Aorta (tissue), 5 donors: ENCODE measurements at regions of chr11 and their contacts with region 1.

Region 1: DNA sequence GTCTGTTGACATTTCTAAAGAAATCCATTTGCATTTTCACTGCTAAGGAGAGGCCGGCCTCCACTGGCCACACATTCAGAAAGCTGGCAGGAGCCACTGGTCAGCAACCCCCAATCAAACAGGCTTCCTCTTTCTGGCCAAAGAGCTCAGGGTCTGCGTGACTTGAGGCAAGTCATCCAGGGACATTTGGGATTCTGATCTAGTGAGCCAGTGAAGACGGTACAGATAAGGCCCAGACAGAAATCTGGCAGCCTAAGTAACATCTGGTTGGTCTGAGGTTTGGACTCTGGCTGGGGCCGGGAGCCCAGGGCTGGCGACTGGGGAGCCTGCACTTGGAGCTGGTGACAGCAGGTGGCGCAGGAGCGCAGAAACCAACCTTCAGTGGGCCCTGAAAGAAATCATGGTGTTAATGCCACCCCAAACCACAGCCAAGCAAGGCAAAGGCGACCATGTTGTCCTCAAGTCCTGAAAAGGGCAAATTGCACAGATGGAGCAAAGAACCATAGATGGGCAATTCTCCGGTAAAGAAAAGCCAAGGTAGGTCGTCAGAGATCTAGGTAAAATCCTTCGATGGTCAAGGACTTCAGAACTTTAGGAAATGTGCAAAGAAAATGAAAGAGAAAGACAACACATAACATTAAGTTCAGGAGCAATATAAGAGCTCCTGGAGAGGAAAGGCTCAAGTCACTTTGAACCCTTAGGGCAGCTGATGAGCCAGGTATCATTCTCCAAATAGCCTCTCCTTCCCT is 99.4 kb upstream of the BLID start:
- DNase-seq: peak; percentile 89 to 92
- ATAC-seq: peak; percentile 90
- H3K4me3 ChIP-seq: no peak overlapping the region
- H3K27ac ChIP-seq: peak overlapping the region; percentile 72 to 83
- H3K4me1 ChIP-seq: peaks cover 6 to 10% of the 10 kb centered on the region in 2 donors
- H3K27me3 ChIP-seq: no peaks in the 10 kb centered on the region

Region 2: DNA sequence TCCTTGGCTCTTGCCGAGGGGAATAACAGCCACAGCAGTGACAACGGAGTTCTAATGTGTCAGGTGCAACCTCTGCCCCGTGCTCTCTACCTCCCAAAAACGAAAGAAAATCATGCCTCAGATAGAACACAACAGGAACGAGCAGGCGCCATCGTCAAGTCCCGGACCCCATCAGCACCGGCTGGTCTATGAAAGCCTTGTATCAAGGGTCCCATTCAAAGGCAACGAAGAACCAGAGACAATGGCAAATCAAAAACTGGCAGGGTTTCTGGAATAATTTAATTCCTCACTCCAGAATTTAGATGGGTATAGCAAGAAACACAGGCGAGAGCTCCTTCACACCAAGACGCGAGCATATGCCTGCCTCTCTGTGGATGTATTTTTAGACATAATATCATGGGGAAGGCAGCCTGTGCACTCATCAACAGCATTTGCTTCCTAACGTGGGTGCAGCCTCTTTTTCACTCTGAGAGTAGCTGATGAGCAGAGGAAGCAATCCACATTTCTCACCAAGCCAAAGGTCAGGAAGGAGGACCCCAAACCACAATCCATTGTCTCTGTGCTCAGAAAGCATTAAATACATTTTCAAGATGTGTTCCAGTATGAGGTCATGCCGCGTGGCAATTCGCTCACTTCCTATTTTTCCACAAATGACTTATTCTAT is 94.0 kb after region 1 on chr11:
- intact Hi-C with region 1: loop called in 1 of 2 experiments (anchors 5 kb)
- DNase-seq: peak in 1 of 2 donors; percentile 55
- ATAC-seq: no peak
- H3K4me3 ChIP-seq: peak overlapping the region; percentile 44 to 86
- H3K27ac ChIP-seq: peak overlapping the region; percentile 31 to 97
- H3K4me1 ChIP-seq: peaks cover 1 to 11% of the 10 kb centered on the region in 2 donors
- H3K27me3 ChIP-seq: no peaks in the 10 kb centered on the region

Region 3: DNA sequence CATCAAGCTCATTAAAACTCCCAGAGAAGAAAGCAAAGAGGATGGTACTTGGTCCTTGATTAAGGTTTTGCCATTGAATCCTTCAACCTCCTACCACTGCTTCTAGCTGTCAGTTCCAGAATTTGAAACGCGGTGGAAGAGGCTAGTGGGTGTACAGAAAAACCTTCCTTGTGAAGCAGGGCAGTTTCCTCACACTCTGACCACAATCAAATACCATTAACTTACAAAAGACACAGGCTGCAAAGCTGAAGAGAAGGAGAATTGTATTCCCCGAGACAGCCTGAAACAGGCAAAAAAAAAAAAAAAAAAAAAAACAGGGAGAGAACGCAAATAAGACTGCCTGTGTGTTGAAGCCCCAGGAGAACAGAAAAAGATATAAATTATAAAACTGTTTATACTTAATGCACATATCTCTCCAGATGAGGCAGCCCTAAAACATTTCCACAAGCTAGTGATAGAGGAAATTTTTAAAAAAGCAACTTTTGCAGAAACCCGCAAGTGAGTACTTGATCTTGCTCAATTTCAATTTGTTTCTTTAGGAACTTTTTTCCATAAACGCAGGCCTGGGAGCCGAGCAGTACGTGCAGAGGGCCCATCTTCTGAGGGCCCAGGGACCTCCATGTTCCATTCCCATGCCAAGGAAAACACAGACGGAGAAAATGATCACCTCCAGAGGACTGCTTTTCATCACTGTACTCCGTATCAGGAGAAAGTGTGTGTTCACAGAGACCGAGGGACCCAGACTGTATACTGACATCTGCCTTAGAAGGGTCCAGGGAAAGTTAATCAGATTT is 119.3 kb after region 1 on chr11:
- intact Hi-C with region 1: loop called in 1 of 2 experiments (anchors 10 kb)
- DNase-seq: no peak
- ATAC-seq: no peak
- H3K4me3 ChIP-seq: peak overlapping the region; percentile 10 to 38
- H3K27ac ChIP-seq: peak overlapping the region; percentile 39 to 52
- H3K4me1 ChIP-seq: peaks cover 3 to 16% of the 10 kb centered on the region in 2 donors
- H3K27me3 ChIP-seq: no peaks in the 10 kb centered on the region

Region 4: DNA sequence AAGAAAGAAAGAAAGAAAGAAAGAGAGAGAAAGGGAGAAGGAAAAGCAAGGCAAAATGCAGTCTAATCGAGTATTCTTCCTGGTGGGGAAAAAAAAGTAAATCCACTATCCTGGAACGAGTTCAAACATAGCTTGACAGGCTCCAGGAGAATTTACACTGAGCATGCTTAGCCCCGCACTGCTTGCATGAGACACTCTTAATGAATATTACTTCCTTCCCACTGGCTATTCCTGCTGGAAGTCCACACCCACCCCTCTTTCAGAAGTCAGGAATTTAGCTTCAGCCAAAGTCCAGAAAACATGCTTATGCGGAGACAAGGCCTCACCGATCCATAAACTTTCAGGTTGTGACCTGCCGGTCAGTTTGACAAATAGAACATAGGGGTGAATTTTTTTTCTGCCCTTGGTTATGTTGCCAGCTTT is 152.4 kb after region 1 on chr11:
- intact Hi-C with region 1: loop called in 1 of 2 experiments (anchors 5 kb)
- DNase-seq: peak in 1 of 2 donors; percentile 54
- ATAC-seq: peak; percentile 78
- H3K4me3 ChIP-seq: no peak overlapping the region
- H3K27ac ChIP-seq: peak overlapping the region; percentile 71 to 82
- H3K4me1 ChIP-seq: peaks cover 3 to 8% of the 10 kb centered on the region in 2 donors
- H3K27me3 ChIP-seq: no peaks in the 10 kb centered on the region

Region 5: GRCh38 chr11:122439911-122440810 is 224.7 kb after region 1 on chr11:
- intact Hi-C with region 1: loop called in 1 of 2 experiments (anchors 10 kb)
- DNase-seq: peak in 1 of 2 donors; percentile 72
- ATAC-seq: peak; percentile 57
- H3K4me3 ChIP-seq: peak overlapping the region; percentile 75 to 89
- H3K27ac ChIP-seq: no peak overlapping the region
- H3K4me1 ChIP-seq: peaks cover 0 to 8% of the 10 kb centered on the region in 2 donors
- H3K27me3 ChIP-seq: no peaks in the 10 kb centered on the region

Region 6: GRCh38 chr11:122491509-122491908 is 276.1 kb after region 1 on chr11:
- intact Hi-C with region 1: loop called (anchors 2 to 5 kb)
- DNase-seq: peak in 1 of 2 donors; percentile 50
- ATAC-seq: peak; percentile 55
- H3K4me3 ChIP-seq: no peak overlapping the region
- H3K27ac ChIP-seq: peak overlapping the region in 1 of 2 donors; percentile 28
- H3K4me1 ChIP-seq: peaks cover 6 to 8% of the 10 kb centered on the region in 2 donors
- H3K27me3 ChIP-seq: no peaks in the 10 kb centered on the region